ENCODE measurements at regions of chr1 and their contacts with region 1.

Region 1: GRCh38 chr1:171741872-171742576 is at the start of gene VAMP4:
- DNase-seq: peak; percentile 95
- H3K4me3 Mint-ChIP-seq: peak within 1 kb of the TSS; percentile 100
- H3K27ac Mint-ChIP-seq: peak within 1 kb of the TSS; percentile 100
- H3K4me1 Mint-ChIP-seq: peaks cover 51% of the 10 kb centered on the region
- H3K27me3 Mint-ChIP-seq: no peaks in the 10 kb centered on the region
- total RNA-seq, gene VAMP4: 7.7 TPM in 2 replicates

Region 2: GRCh38 chr1:171485375-171486047 is 256.5 kb before region 1 on chr1 and contains the start of gene PRRC2C:
- intact Hi-C with region 1: loop called (anchors 2 kb)
- DNase-seq: peak; percentile 98
- H3K4me3 Mint-ChIP-seq: peak within 1 kb of the TSS; percentile 94
- H3K27ac Mint-ChIP-seq: peak within 1 kb of the TSS; percentile 99
- H3K4me1 Mint-ChIP-seq: peaks cover 40% of the 10 kb centered on the region
- H3K27me3 Mint-ChIP-seq: no peaks in the 10 kb centered on the region
- total RNA-seq, gene PRRC2C: 278 TPM in 2 replicates

Region 3: GRCh38 chr1:171644805-171645483 is 97.1 kb before region 1 on chr1:
- intact Hi-C with region 1: loop called (anchors 2 kb)
- DNase-seq: peak; percentile 92
- H3K4me3 Mint-ChIP-seq: no peak overlapping the region
- H3K27ac Mint-ChIP-seq: no peak overlapping the region
- H3K4me1 Mint-ChIP-seq: peaks cover 8% of the 10 kb centered on the region
- H3K27me3 Mint-ChIP-seq: no peaks in the 10 kb centered on the region

Region 4: GRCh38 chr1:171788696-171789095 is 46.7 kb after region 1 on chr1:
- intact Hi-C with region 1: no loop called
- DNase-seq: no peak
- H3K4me3 Mint-ChIP-seq: no peak overlapping the region
- H3K27ac Mint-ChIP-seq: no peak overlapping the region
- H3K4me1 Mint-ChIP-seq: peaks cover 42% of the 10 kb centered on the region
- H3K27me3 Mint-ChIP-seq: no peaks in the 10 kb centered on the region

Region 5: DNA sequence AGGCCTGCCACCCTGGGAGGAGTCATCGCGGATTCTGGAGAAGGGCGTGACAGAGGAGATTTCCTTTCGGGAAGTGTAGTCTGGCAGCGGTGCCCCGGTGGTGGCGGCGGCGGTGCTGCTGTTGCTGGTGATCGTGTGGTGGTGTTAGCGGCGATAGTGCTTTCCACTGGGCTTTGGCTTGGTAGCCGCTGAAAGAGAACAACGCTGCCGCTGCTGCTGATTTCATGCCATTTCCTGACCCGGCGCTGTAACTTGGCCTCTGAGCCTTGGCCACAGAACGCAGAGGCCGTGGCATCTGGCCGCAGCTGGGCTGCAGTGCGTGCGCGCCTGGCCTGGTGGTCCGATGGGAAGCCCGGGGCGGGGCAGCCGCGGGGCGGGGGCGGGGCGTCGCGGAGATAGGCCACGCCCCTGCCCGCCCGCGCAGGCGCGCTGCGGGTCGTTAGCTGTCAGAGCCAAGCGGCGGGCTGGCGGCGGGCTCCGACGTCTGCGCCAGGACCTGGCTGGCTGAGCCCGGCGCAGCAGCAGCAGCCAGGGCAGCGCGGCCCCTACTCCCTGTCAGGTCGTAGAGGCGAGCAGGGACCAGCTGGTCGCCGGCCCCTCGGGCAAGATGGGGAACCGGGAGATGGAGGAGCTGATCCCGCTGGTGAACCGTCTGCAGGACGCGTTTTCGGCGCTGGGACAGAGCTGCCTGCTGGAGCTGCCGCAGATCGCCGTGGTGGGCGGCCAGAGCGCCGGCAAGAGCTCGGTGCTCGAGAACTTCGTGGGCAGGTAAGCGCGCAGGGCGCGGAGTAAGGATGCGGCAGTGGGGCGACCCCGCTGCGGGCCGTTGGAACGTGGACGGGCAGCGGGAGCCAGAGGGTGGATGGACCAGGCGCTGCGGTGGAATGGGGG is 99.3 kb after region 1 on chr1 and contains the start of gene DNM3:
- intact Hi-C with region 1: loop called (anchors 2 kb)
- DNase-seq: peak; percentile 95
- H3K4me3 Mint-ChIP-seq: peak within 1 kb of the TSS; percentile 89
- H3K27ac Mint-ChIP-seq: peak within 1 kb of the TSS; percentile 71
- H3K4me1 Mint-ChIP-seq: peaks cover 12% of the 10 kb centered on the region
- H3K27me3 Mint-ChIP-seq: peaks cover 34% of the 10 kb centered on the region
- total RNA-seq, gene DNM3: 0.42 and 0.45 TPM in 2 replicates

Region 6: GRCh38 chr1:172269644-172270043 is 527.6 kb after region 1 on chr1:
- intact Hi-C with region 1: loop called (anchors 5 kb)
- DNase-seq: no peak
- H3K4me3 Mint-ChIP-seq: peak overlapping the region; percentile 29
- H3K27ac Mint-ChIP-seq: peak overlapping the region; percentile 88
- H3K4me1 Mint-ChIP-seq: peaks cover 44% of the 10 kb centered on the region
- H3K27me3 Mint-ChIP-seq: no peaks in the 10 kb centered on the region

Measured in activated CD4-positive, alpha-beta T cell treated with anti-CD3 and anti-CD28 coated beads, Interleukin-2, amount 10 ng/mL, durations not matched to agents 24 days and 14 days (primary cell).